Breast epithelium (tissue), 4 donors: ENCODE measurements at regions of chr16 and their contacts with region 1.

Region 1: DNA sequence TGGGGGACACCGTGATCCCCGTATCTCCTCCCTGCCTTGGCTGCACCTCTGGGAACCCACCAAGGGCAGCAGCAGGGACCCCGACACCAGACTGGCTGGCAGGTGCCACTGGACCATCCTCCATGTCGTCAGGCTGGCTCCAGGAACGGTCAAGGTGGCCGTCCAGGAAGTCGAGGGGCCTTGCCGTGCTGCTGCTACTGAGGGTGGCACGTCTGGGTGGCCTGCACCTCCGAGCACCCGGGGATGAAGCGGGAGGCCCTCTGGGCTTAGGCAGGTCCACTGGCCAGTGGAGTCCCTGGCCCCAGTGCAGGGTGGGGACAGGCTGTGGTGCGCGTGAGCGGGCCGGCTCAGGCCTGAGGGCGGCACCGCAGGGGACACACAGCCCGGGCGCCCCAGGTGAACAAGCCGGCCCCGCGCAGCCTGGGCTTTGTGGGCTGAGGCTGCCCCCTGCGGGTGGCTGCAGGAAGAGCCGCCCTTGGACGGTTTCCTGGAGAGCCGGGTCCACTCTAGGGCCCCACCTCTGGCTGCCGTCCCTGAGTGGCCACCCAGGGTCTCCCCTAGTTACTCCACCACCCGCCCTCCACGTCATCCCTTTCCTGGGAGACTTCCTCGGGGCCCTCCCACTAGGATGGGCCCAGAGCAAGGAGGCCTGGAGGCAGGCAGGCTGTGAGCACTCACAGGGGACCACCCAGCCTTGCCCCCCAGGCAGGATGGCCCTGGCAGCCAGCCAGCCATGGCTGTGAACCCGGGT is 42.8 kb upstream of the ZC3H18 start:
- DNase-seq: peak in 1 of 2 donors; percentile 70
- H3K4me3 ChIP-seq: peak overlapping the region in 1 of 3 donors; percentile 26
- H3K27ac ChIP-seq: peak overlapping the region in 1 of 2 donors; percentile 38
- H3K4me1 ChIP-seq: peaks cover 7 to 10% of the 10 kb centered on the region in 2 donors
- H3K27me3 ChIP-seq: no peaks in the 10 kb centered on the region
- CTCF ChIP-seq: peak; percentile 46 to 83 (median 75)
- POLR2A ChIP-seq: no peak

Region 2: GRCh38 chr16:88442727-88443576 is 84.4 kb before region 1 on chr16:
- intact Hi-C with region 1: loop called (anchors 1 kb)
- DNase-seq: peak; percentile 53 to 85
- H3K4me3 ChIP-seq: no peak overlapping the region
- H3K27ac ChIP-seq: no peak overlapping the region
- H3K4me1 ChIP-seq: peaks cover 0 to 7% of the 10 kb centered on the region in 2 donors
- H3K27me3 ChIP-seq: peaks cover 0 to 11% of the 10 kb centered on the region in 2 donors
- CTCF ChIP-seq: peak; percentile 74 to 98 (median 96)
- POLR2A ChIP-seq: no peak

Region 3: GRCh38 chr16:88505405-88506082 is 21.8 kb before region 1 on chr16:
- intact Hi-C with region 1: loop called (anchors 1 kb)
- DNase-seq: no peak
- H3K4me3 ChIP-seq: no peak overlapping the region
- H3K27ac ChIP-seq: no peak overlapping the region
- H3K4me1 ChIP-seq: peaks cover 0 to 4% of the 10 kb centered on the region in 2 donors
- H3K27me3 ChIP-seq: no peaks in the 10 kb centered on the region
- CTCF ChIP-seq: peak in 2 of 3 donors; percentile 21 to 44
- POLR2A ChIP-seq: no peak

Region 4: GRCh38 chr16:89289428-89290395 is 762.4 kb after region 1 on chr16:
- intact Hi-C with region 1: no loop called
- DNase-seq: peak in 1 of 2 donors; percentile 70
- H3K4me3 ChIP-seq: no peak overlapping the region
- H3K27ac ChIP-seq: no peak overlapping the region
- H3K4me1 ChIP-seq: peaks cover 0 to 2% of the 10 kb centered on the region in 2 donors
- H3K27me3 ChIP-seq: no peaks in the 10 kb centered on the region
- CTCF ChIP-seq: peak in 2 of 3 donors; percentile 58 to 62
- POLR2A ChIP-seq: no peak